Esophagus squamous epithelium (tissue), 5 donors: ENCODE measurements at regions of chr3 and their contacts with region 1.

Region 1: GRCh38 chr3:32138545-32139104 is 32.2 kb downstream of the GPD1L start:
- DNase-seq: no peak
- H3K4me3 ChIP-seq: no peak overlapping the region
- H3K27ac ChIP-seq: no peak overlapping the region
- H3K4me1 ChIP-seq: peaks cover 0 to 11% (median 0%) of the 10 kb centered on the region in 3 donors
- H3K27me3 ChIP-seq: no peaks in the 10 kb centered on the region
- CTCF ChIP-seq: no peak
- POLR2A ChIP-seq: no peak

Region 2: DNA sequence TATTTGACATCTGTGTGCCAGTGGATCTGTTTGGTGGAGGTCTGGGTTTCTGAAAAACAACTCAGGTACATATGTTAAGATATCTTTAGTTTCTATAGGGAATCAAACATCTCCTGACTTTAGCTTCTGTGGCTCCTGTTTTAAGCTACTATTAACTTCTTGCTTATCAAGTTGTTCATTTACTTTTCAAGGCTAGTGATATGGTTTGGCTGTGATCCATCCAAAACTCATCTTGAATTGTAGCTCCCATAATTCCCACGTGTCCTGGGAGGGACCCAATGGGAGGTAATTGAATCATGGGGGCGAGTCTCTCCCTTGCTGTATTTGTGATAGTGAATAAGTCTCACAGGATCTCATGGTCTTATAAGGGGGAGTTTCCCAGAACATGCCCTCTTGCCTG is 115.7 kb before region 1 on chr3:
- intact Hi-C with region 1: loop called (anchors 5 kb)
- DNase-seq: no peak
- H3K4me3 ChIP-seq: no peak overlapping the region
- H3K27ac ChIP-seq: no peak overlapping the region
- H3K4me1 ChIP-seq: peaks cover 0 to 13% (median 0%) of the 10 kb centered on the region in 3 donors
- H3K27me3 ChIP-seq: no peaks in the 10 kb centered on the region
- CTCF ChIP-seq: no peak
- POLR2A ChIP-seq: no peak